ENCODE measurements at regions of chr17 and their contacts with region 1.

Region 1: DNA sequence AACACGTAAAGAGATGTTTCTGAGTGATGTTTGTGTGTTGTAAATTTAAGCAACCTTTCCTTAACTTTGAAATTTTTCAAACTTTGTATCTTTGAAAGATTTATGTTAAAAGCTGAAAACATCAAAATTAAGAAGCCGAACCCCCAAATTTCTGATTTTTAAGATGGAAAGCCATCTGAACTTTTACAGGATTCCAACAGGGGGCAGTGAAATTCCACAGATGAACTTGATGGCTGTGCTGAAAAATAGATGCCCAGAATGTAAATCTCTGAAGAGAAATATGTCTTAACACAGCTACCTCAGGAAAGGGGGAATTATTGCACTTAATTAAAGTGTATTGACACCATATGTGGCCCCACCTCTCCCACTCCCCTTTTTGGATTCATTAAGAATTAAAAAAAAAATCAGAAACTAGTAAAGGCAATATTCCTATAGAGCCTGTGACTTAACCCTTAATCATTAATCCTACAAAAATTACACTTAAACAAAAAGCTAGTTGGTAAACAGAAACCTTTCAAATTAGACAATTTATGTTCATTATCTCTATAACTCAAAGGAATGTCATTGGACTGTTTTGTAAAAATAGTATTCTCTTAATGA is 597.9 kb downstream of the KCNJ2 start:
- DNase-seq: peak; percentile 27

Region 2: DNA sequence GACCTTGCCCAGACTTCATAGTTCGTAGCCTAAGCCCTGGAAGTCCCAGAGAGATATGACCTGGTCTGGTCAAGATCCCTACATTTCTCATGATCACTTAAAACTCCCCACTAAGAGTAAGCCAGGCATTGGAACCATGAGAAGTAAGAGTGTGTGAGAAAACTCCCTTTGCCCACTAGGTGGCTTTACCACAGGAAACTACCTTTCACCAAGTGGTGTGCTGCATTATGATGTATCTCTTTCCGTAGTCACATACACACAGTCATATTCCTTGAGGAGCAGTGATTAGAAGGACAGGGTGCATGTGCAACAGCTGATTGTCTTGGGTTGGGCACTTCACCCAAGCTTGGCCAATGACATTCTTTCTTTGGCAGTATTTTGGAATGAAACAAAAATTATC is 41.4 kb after region 1 on chr17:
- CTCF ChIA-PET with region 1: no interaction called
- POLR2A ChIA-PET with region 1: no interaction called
- DNase-seq: peak; percentile 25

Region 3: GRCh38 chr17:71084219-71084618 is 317.0 kb after region 1 on chr17:
- CTCF ChIA-PET with region 1: interaction called, 11 read pairs
- POLR2A ChIA-PET with region 1: no interaction called
- DNase-seq: peak; percentile 53